IMR-90 (cell line): ENCODE measurements at regions of chr1 and their contacts with region 1.

Region 1: DNA sequence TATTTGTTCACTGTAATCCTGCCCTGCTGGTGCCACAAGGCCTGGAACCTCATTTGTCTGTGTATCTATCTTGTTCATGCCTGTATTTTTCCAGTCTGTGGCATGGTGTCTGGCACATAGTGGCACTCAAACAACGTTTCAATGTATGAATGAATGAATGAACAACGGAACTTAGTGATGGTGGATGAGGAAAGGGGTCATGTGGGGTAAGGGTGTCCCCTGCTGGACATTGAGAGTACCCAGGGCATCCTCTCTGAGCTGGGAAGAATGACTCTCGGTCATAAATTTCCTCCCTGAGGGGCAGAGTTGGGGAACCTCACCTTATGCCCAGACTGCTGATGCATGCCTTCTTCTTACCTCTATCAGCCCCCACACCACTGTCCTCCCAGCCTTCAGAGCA is 18.9 kb upstream of the ZNF683 start:
- DNase-seq: peak; percentile 59
- ATAC-seq: peak; percentile 94
- H3K4me3 ChIP-seq: no peak overlapping the region
- H3K27ac ChIP-seq: no peak overlapping the region
- H3K4me1 ChIP-seq: no peaks in the 10 kb centered on the region
- H3K27me3 ChIP-seq: peaks cover 2% of the 10 kb centered on the region; the same call in 1 of the 2 replicates
- CTCF ChIP-seq: peak; percentile 90
- POLR2A ChIP-seq: no peak
- RAD21 ChIP-seq: peak; percentile 94

Region 2: DNA sequence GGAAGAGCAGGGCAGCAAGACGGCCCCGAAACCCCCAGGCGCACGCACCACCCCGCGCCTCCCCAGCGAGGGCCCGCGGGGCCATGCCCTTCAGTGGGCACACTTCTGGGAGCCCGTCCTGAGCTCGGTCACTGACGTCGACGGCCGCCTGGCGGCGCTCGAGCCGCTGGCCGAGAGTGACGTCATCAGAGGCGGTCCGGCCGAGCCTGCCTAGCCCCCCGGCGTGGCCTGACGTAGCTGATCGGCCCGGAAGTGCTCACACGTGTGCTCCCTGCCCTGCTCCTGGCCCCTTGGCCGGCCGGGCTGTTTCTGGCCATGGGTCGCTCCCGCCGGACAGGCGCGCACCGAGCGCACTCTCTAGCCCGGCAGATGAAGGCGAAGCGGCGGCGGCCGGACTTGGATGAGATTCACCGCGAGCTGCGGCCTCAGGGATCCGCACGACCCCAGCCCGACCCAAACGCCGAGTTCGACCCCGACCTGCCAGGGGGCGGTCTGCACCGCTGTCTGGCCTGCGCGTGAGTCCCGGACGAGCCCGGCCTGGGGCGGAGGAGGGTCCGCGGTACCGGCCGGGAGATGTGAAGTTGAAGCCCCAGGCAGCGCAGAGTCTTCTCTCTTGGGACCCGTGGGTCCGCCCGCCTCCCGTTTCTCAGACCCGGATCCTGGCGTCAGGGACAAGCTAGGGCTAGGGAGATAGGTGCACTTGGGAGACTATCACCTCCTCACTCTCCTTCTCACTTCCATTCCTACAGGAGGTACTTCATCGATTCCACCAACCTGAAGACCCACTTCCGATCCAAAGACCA is 221.6 kb before region 1 on chr1 and contains the start of gene ZNF593:
- CTCF ChIA-PET with region 1: no interaction called
- POLR2A ChIA-PET with region 1: no interaction called
- dilution Hi-C with region 1: no loop called
- in situ Hi-C with region 1: no loop called
- intact Hi-C with region 1: loop called (anchors 1 kb)
- DNase-seq: peak; percentile 90
- ATAC-seq: peak; percentile 96
- H3K4me3 ChIP-seq: peak within 1 kb of the TSS; percentile 84
- H3K27ac ChIP-seq: peak within 1 kb of the TSS; percentile 66
- H3K4me1 ChIP-seq: peaks cover 5% of the 10 kb centered on the region; the same call in 1 of the 2 replicates
- H3K27me3 ChIP-seq: no peaks in the 10 kb centered on the region; the same call in 1 of the 2 replicates
- CTCF ChIP-seq: peak; percentile 98
- POLR2A ChIP-seq: peak; percentile 77
- RAD21 ChIP-seq: peak; percentile 55
- total RNA-seq, gene ZNF593: 22.2 and 22.8 TPM in 2 replicates

Region 3: GRCh38 chr1:26279456-26280332 is 111.8 kb before region 1 on chr1 and contains the start of gene SH3BGRL3:
- CTCF ChIA-PET with region 1: no interaction called
- POLR2A ChIA-PET with region 1: no interaction called
- dilution Hi-C with region 1: no loop called
- in situ Hi-C with region 1: no loop called
- intact Hi-C with region 1: loop called (anchors 1 kb)
- DNase-seq: peak; percentile 75
- ATAC-seq: peak; percentile 68
- H3K4me3 ChIP-seq: peak within 1 kb of the TSS; percentile 89
- H3K27ac ChIP-seq: peak within 1 kb of the TSS; percentile 95
- H3K4me1 ChIP-seq: peaks cover 64% of the 10 kb centered on the region
- H3K27me3 ChIP-seq: no peaks in the 10 kb centered on the region
- CTCF ChIP-seq: peak; percentile 46
- POLR2A ChIP-seq: peak; percentile 93
- RAD21 ChIP-seq: no peak; the same call in 1 of the 2 replicates
- total RNA-seq, gene SH3BGRL3: 32.2 and 35.0 TPM in 2 replicates

Region 4: GRCh38 chr1:26853156-26853555 is 461.7 kb after region 1 on chr1:
- CTCF ChIA-PET with region 1: no interaction called
- POLR2A ChIA-PET with region 1: no interaction called
- dilution Hi-C with region 1: no loop called
- in situ Hi-C with region 1: no loop called
- intact Hi-C with region 1: no loop called
- DNase-seq: peak; percentile 80
- ATAC-seq: peak; percentile 87
- H3K4me3 ChIP-seq: no peak overlapping the region
- H3K27ac ChIP-seq: no peak overlapping the region
- H3K4me1 ChIP-seq: peaks cover 10% of the 10 kb centered on the region
- H3K27me3 ChIP-seq: no peaks in the 10 kb centered on the region
- CTCF ChIP-seq: peak; percentile 88
- POLR2A ChIP-seq: 0 out of 2 replicates have a peak, but pooled peaks have one; percentile 40
- RAD21 ChIP-seq: peak; percentile 86

Region 5: GRCh38 chr1:28115267-28115666 is 1723.8 kb after region 1 on chr1:
- CTCF ChIA-PET with region 1: no interaction called
- POLR2A ChIA-PET with region 1: no interaction called
- dilution Hi-C with region 1: no loop called
- in situ Hi-C with region 1: no loop called
- intact Hi-C with region 1: no loop called
- DNase-seq: peak; percentile 68
- ATAC-seq: no peak
- H3K4me3 ChIP-seq: no peak overlapping the region
- H3K27ac ChIP-seq: no peak overlapping the region
- H3K4me1 ChIP-seq: peaks cover 5% of the 10 kb centered on the region; the same call in 1 of the 2 replicates
- H3K27me3 ChIP-seq: no peaks in the 10 kb centered on the region
- CTCF ChIP-seq: no peak
- POLR2A ChIP-seq: no peak
- RAD21 ChIP-seq: no peak